ENCODE measurements at regions of chr2 and their contacts with region 1.

Region 1: GRCh38 chr2:64988420-64989125 is 626 bp upstream of the SLC1A4 start:
- DNase-seq: peak; percentile 88
- H3K4me3 Mint-ChIP-seq: peak overlapping the region; percentile 72
- H3K27ac Mint-ChIP-seq: peak overlapping the region; percentile 74
- H3K4me1 Mint-ChIP-seq: peaks cover 70% of the 10 kb centered on the region
- H3K27me3 Mint-ChIP-seq: peaks cover 4% of the 10 kb centered on the region

Region 2: GRCh38 chr2:64945973-64946768 is 42.4 kb before region 1 on chr2:
- CTCF ChIA-PET with region 1: interaction called, 6 read pairs
- POLR2A ChIA-PET with region 1: interaction called, 56 read pairs
- DNase-seq: peak; percentile 84
- H3K4me3 Mint-ChIP-seq: peak overlapping the region; percentile 68
- H3K27ac Mint-ChIP-seq: peak overlapping the region; percentile 94
- H3K4me1 Mint-ChIP-seq: peaks cover 58% of the 10 kb centered on the region
- H3K27me3 Mint-ChIP-seq: no peaks in the 10 kb centered on the region

Region 3: GRCh38 chr2:64976276-64976675 is 12.3 kb before region 1 on chr2:
- CTCF ChIA-PET with region 1: interaction called, 6 read pairs
- POLR2A ChIA-PET with region 1: interaction called, 10 read pairs
- DNase-seq: no peak
- H3K4me3 Mint-ChIP-seq: no peak overlapping the region
- H3K27ac Mint-ChIP-seq: no peak overlapping the region
- H3K4me1 Mint-ChIP-seq: peaks cover 32% of the 10 kb centered on the region
- H3K27me3 Mint-ChIP-seq: peaks cover 10% of the 10 kb centered on the region

Region 4: GRCh38 chr2:65003037-65003436 is 14.5 kb after region 1 on chr2:
- CTCF ChIA-PET with region 1: interaction called, 3 read pairs
- POLR2A ChIA-PET with region 1: interaction called, 13 read pairs
- DNase-seq: no peak
- H3K4me3 Mint-ChIP-seq: no peak overlapping the region
- H3K27ac Mint-ChIP-seq: no peak overlapping the region
- H3K4me1 Mint-ChIP-seq: peaks cover 9% of the 10 kb centered on the region
- H3K27me3 Mint-ChIP-seq: no peaks in the 10 kb centered on the region